SK-N-SH (cell line): ENCODE measurements at regions of chr17 and their contacts with region 1.

Region 1: DNA sequence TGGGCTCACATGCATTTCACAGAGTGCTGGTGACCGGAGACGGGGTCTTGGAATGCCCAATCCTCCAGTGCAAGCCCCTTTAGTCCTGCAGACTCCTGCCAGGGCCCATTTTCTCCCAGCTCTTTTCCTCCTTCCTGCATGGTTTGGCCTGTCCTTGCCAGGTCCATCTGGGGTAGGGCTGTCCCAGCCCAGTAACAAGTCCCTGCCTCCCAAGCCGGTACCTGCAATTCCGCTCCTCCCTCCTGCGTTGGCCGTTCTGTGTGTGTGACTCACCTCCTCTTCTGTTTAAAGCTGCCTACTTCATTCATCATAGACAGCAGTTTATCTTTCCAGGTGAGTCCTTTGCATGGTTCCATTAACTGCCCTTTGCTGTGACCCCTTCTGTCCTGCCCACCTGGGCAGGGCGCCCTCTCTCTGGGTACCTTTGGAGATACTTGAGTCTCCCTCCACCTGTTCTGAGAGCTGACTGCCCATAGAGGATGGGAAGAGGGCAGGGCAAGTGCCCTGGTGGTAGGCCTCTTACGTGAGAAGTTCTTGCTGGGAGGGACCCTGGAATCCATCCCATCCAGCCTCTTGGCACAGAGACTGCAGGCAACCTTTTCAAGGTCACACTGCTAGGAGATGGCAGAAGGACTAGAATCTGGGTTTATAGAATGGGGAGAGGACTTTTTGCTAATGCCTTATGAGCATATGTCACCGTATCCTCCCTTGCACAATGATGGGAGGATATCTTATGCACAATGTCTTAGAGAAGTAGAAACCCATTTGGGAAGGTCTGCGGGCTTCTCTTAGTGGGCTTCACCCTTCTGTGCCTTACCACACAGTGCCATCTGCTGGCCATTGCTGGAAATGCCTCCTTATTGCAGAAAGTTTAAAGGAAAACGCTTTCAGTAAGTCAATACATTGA is 29.7 kb upstream of the LGALS9 start:
- DNase-seq: peak; percentile 77
- H3K4me3 ChIP-seq: no peak overlapping the region; a peak in 1 of 4 replicates
- H3K27ac ChIP-seq: no peak overlapping the region
- H3K4me1 ChIP-seq: peaks cover 0 to 16% of the 10 kb centered on the region in 2 experiments; a peak in 2 of 4 replicates
- H3K27me3 ChIP-seq: no peaks in the 10 kb centered on the region
- CTCF ChIP-seq: peak; percentile 96
- EP300 ChIP-seq: no peak
- RAD21 ChIP-seq: peak; percentile 97

Region 2: DNA sequence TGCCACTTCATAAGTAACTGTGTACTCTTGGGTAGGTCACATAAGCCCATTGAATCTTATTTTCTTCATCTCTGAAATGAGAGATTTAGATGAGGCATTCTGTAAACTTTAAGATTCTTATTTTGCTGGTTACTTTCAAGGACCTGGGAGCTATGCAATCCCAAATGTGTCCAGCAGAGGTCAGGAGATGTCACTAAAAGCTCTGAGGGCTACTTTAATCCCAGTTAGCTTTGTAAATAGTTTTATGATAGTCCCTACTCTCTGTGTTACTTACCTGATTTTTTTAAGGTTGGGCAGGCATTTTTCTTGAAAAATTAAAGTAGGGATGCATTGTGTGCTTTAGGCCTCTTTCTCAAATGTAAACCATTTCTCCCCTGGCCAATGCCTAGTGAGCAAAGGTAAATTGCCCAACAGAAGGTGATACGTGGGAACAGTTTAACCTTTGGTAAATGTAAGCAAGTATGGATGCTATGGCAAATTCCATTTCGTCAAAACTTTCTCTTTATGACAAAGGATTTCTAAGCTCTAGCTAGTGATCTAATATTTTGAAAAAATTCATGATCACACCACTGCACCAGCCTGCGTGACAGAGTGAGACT is 364.5 kb before region 1 on chr17:
- CTCF ChIA-PET with region 1: interaction called, 106 read pairs
- POLR2A ChIA-PET with region 1: no interaction called
- DNase-seq: peak; percentile 70
- H3K4me3 ChIP-seq: no peak overlapping the region
- H3K27ac ChIP-seq: no peak overlapping the region
- H3K4me1 ChIP-seq: no peaks in the 10 kb centered on the region
- H3K27me3 ChIP-seq: no peaks in the 10 kb centered on the region
- CTCF ChIP-seq: peak; percentile 94
- EP300 ChIP-seq: no peak
- RAD21 ChIP-seq: peak; percentile 92

Region 3: DNA sequence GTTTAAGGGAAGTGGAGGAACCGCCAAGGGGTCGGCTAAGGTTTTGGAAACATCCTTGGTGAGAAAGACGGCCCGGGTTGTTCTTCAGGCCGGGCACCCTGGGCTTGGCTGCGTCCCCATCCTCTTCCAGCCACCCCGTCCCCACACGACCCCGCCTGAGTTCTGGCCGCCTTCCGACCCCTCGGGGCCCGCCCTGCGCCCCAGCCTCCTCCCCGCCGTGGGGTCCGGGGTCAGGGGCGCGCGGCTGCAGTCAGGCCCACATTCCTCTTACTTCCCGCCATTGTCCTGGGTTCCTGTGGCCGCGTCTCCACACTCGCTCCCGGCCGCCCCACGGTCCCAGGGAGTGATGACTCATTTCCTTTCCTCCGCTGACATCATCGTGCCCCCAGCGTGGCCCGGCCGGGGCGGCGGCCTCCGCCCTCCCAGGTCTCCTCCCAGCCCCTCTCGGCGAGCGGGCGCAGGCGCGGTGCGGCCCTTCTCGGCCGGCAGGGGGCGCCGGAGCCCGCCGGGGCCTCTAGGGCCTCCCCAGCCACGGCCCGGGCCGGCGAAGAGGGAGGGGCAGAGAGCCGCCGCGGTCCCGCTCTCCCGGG is 247.8 kb before region 1 on chr17:
- CTCF ChIA-PET with region 1: interaction called, 98 read pairs
- POLR2A ChIA-PET with region 1: interaction called, 3 read pairs
- DNase-seq: peak; percentile 99
- H3K4me3 ChIP-seq: peak overlapping the region; percentile 65 to 82
- H3K27ac ChIP-seq: peak overlapping the region; percentile 83 to 88
- H3K4me1 ChIP-seq: peaks cover 0 to 11% of the 10 kb centered on the region in 2 experiments; a peak in 1 of 4 replicates
- H3K27me3 ChIP-seq: no peaks in the 10 kb centered on the region
- CTCF ChIP-seq: peak; percentile 78
- EP300 ChIP-seq: peak in 1 of 2 experiments; percentile 74; a peak in 1 of 4 replicates
- RAD21 ChIP-seq: peak; percentile 77

Region 4: DNA sequence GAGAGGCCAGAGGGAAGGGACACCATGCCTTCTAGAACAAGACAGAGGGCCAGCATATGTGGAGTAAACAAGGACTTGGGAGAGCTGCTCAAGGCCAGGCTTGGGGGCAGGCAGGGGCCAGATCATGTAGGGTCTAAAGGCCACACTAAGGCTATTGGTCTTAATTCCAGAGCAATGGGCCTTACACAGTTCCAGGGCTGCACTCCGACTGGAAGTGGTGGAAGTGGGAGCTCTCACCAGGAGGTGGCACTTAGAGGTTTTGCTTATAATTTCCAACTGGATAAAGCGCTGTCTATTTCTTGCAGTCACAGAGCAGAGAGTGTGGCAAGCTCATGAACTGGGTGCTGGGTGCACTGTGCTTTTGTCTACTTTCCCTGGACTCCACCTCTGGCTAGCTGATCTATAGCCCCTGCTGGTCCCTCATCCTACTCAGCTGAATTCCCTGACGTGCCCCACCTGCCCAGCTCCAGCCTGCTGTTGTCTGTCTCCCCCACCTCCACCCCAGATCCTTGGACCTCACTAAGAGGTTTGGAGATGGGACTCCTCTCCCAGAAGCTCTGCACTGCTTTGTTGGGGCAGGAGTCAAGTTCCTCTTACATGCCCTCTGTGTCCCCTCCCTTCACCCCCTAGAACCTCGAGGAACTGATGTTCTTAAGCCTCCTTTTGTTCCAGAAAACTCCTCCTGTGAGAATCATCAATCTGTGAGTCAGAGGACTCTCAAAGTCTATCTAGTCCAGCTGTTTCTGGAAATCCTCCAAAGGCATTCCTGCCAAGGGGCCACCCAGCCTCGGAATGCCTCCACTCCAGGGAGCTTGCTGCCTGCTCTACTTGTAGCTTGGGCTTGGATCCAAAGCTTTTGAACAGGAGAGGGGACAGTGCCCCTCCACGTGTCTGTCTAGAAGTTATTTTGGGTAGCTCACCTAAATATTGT is 193.1 kb before region 1 on chr17:
- CTCF ChIA-PET with region 1: interaction called, 11 read pairs
- POLR2A ChIA-PET with region 1: no interaction called
- DNase-seq: no peak
- H3K4me3 ChIP-seq: peak overlapping the region in 1 of 2 experiments; percentile 22; a peak in 1 of 4 replicates
- H3K27ac ChIP-seq: no peak overlapping the region
- H3K4me1 ChIP-seq: peaks cover 0 to 11% of the 10 kb centered on the region in 2 experiments; a peak in 1 of 4 replicates
- H3K27me3 ChIP-seq: no peaks in the 10 kb centered on the region; the same call in 1 of the 2 replicates
- CTCF ChIP-seq: no peak
- EP300 ChIP-seq: no peak
- RAD21 ChIP-seq: no peak

Region 5: DNA sequence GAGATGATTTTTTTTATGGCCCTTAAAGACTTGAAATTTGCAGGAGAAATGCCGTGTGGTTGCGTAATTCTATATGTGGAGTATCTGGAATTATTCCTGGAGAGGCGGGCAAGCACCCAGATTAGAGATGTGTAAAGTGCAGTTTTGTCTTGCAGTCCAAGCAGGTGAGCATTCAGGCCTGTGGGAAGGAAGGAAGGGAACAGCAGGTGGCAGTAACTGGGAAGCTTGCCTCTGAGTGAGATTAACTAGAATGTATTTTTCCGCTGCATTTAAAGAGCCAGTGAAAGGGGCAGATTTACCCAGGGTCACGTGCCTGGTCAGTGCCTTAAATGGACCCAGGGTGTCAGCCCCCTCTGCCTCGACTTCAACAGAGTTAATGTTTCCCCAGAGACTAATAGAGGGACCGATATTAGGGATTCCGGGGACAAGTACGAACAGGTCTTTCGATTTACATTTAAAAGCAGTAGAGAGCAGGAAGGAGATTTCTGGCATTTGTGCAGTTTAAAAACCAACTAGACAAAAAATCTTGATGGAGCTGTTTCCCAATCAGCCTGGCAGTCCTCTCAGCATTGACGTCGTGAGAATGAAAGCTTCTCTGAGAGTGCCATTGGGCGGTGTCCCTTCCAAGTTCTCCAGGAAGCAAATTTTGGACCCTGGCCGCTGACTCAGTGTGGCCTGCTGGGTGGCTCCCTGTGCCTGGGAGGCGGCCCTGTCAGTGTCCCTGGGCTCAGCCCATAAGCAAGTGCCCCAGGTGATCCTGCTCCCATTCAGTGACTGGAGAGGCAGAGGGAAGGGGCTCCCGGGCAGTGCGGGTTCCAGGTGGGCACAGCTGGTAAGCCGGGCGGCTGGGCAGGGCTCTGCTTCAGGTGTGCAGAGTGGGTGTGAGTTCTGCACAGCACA is 106.9 kb before region 1 on chr17:
- CTCF ChIA-PET with region 1: interaction called, 28 read pairs
- POLR2A ChIA-PET with region 1: no interaction called
- DNase-seq: no peak
- H3K4me3 ChIP-seq: no peak overlapping the region
- H3K27ac ChIP-seq: no peak overlapping the region
- H3K4me1 ChIP-seq: peaks cover 0 to 6% of the 10 kb centered on the region in 2 experiments; a peak in 2 of 4 replicates
- H3K27me3 ChIP-seq: no peaks in the 10 kb centered on the region
- CTCF ChIP-seq: peak; percentile 41
- EP300 ChIP-seq: no peak
- RAD21 ChIP-seq: peak; percentile 46

Region 6: GRCh38 chr17:27569257-27569722 is 32.0 kb before region 1 on chr17:
- CTCF ChIA-PET with region 1: interaction called, 55 read pairs
- POLR2A ChIA-PET with region 1: no interaction called
- DNase-seq: peak; percentile 64
- H3K4me3 ChIP-seq: no peak overlapping the region; a peak in 1 of 4 replicates
- H3K27ac ChIP-seq: no peak overlapping the region; a peak in 1 of 4 replicates
- H3K4me1 ChIP-seq: peaks cover 27 to 51% of the 10 kb centered on the region in 2 experiments; a peak in 3 of 4 replicates
- H3K27me3 ChIP-seq: no peaks in the 10 kb centered on the region
- CTCF ChIP-seq: peak; percentile 65
- EP300 ChIP-seq: no peak
- RAD21 ChIP-seq: peak; percentile 58

Region 7: DNA sequence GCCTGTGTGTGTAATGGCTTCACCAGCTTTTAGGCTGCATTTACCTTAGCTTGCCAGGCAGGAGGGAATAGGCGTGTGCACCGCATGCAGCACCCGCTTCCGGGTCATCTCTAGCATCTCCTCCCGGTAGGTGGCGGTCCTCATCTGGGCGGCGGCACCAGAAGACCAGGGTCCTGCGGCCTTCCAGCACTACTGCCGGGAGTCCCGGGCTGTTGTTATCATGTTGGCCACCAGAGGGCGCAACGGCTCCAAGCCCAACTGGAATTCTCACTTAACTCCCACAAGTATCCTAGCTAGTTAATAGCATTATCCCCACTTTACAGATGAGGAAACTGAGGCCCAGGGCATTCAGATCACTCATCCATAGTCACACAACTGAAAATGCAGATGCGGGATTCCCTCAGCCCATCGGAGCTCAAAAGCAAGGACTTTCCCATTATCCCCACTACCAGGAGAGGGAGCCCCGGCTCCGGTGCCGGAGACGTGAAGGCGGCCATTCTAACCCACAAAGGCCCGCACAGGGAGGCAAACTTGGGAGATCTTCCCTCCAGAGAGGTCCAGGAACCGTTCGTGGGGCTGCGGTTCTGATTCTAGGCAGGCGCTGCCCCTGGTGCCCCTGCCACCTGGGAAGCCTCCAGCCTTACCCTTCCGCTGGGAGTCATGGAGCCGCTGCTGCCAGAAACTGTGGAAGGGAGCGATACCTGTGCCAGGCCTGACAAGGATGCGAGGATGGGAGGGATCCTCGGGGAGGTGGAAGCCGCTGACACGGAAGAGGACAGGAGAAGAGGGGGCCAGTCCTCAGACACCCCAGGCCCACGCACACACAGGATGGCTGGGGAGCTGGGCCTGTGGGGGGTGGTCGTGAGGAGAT is 53.6 kb after region 1 on chr17:
- CTCF ChIA-PET with region 1: interaction called, 365 read pairs
- POLR2A ChIA-PET with region 1: no interaction called
- DNase-seq: peak; percentile 93
- H3K4me3 ChIP-seq: peak overlapping the region in 1 of 2 experiments; percentile 43; a peak in 1 of 4 replicates
- H3K27ac ChIP-seq: no peak overlapping the region
- H3K4me1 ChIP-seq: no peaks in the 10 kb centered on the region; a peak in 1 of 4 replicates
- H3K27me3 ChIP-seq: no peaks in the 10 kb centered on the region
- CTCF ChIP-seq: peak; percentile 93
- EP300 ChIP-seq: no peak
- RAD21 ChIP-seq: peak; percentile 68